HepG2 (cell line): ENCODE measurements at regions of chr6 and their contacts with region 1.

Region 1: DNA sequence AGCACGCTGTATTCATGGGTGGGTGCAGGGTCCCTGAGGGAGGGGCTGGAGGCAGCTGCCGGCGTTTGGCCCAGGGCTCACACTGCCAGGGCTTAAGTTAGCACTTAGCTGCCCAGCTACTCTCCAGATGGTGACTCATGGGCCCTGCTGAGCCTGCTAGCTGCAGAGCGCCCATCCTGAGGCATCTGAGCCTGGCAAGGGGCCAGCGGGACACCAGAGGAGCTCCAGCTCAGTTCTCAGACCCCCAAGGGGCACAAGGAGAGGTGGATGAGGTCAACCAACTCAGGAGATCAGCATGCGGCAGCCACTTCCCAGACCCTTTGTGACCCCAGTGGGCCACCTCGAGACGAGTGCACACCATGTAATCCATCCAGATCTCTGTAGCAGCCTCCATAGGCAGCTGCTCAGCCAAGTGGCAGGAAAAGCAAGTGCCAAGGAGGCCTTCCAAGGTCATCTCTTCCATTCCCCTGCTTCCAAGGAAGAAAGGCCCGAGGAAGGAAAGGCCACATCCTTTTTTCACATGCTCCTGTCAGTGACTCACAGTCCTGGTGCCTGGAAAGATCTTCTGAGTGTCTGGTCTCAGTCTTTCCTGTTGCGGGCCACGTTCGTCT is 35.3 kb downstream of the FOXP4 start:
- DNase-seq: no peak
- ATAC-seq: no peak
- H3K4me3 ChIP-seq: no peak overlapping the region
- H3K27ac ChIP-seq: no peak overlapping the region
- H3K4me1 ChIP-seq: peaks cover 86% of the 10 kb centered on the region
- H3K27me3 ChIP-seq: no peaks in the 10 kb centered on the region
- CTCF ChIP-seq: no peak
- EP300 ChIP-seq: no peak
- POLR2A ChIP-seq: no peak
- RAD21 ChIP-seq: no peak

Region 2: DNA sequence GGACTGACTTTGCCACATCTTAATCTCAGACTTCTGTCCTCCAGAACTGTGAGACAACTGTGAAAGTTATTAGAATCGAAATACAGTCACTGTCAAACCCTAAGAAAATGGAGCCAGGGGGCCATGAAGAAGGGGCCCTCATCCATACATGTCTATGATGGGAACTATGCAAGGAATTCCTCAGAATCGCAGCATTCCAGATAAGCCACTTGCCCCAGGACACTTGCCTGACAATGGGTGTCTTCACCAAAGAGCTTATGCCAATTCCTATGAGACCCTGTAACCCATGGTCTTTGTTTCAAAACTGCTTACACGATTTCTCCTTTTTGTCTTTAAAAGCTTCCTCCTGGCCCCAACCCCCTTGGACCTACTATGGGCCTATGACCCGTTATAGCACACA is 125.7 kb before region 1 on chr6:
- CTCF ChIA-PET with region 1: no interaction called
- POLR2A ChIA-PET with region 1: interaction called, 20 read pairs
- in situ Hi-C with region 1: no loop called
- intact Hi-C with region 1: no loop called
- DNase-seq: no peak
- ATAC-seq: no peak
- H3K4me3 ChIP-seq: no peak overlapping the region
- H3K27ac ChIP-seq: no peak overlapping the region
- H3K4me1 ChIP-seq: peaks cover 90% of the 10 kb centered on the region
- H3K27me3 ChIP-seq: peaks cover 10 to 36% of the 10 kb centered on the region in 2 experiments; a peak in 4 of 5 replicates
- CTCF ChIP-seq: no peak
- EP300 ChIP-seq: no peak
- POLR2A ChIP-seq: no peak
- RAD21 ChIP-seq: no peak

Region 3: DNA sequence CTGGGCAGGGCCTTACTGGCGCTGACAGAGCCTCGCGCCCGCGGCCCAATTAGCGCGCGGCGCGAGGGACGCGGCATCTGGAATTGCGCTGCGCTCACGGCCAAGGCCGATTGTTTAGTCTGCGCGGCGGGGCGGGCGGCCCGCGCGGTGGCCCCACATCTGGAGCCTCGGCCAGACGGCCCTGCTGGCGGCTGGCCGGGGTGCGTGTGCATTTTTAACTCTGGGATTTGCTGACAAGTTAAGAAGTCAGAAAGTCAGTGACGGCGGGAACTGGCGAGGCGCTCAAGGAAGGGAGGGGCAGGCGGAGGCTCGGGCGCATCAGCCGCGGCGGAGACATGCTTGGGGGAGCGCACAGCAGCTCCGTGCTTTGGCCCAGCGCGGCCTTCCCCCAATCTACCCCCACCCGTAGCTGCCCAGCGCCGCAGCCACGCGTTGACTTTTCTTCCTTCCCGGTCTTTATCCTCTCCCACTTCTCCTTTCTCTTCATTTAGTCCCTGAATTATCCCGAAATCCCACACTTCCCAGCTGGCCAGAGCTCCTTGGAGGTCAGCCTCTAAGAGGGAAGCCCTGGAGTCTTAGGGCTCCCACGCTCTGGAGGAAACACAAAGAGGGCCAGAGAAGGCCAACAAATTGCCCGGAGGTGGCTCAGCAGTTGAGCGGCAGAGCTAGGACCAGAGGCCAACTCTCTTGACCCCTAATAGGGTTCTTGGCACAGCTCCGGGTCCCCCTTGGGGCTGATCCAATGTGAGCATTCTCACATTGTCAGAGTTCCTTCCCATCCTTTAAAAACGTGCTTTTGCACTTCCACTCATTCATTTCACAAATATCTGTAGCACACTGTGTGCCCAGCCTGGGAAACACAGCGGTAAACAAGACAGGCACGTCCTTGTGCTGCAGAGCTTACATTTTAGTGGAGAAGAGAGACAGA is 76.1 kb before region 1 on chr6:
- CTCF ChIA-PET with region 1: no interaction called
- POLR2A ChIA-PET with region 1: interaction called, 10 read pairs
- in situ Hi-C with region 1: no loop called
- intact Hi-C with region 1: no loop called
- DNase-seq: no peak
- ATAC-seq: no peak
- H3K4me3 ChIP-seq: no peak overlapping the region
- H3K27ac ChIP-seq: no peak overlapping the region
- H3K4me1 ChIP-seq: peaks cover 76% of the 10 kb centered on the region
- H3K27me3 ChIP-seq: no peaks in the 10 kb centered on the region; a peak in 1 of 5 replicates
- CTCF ChIP-seq: no peak
- EP300 ChIP-seq: no peak
- POLR2A ChIP-seq: no peak
- RAD21 ChIP-seq: no peak

Region 4: GRCh38 chr6:41536795-41537758 is 44.4 kb before region 1 on chr6:
- CTCF ChIA-PET with region 1: no interaction called
- POLR2A ChIA-PET with region 1: interaction called, 16 read pairs
- in situ Hi-C with region 1: no loop called
- intact Hi-C with region 1: no loop called
- DNase-seq: no peak
- ATAC-seq: no peak; the same call in 2 of the 3 replicates
- H3K4me3 ChIP-seq: no peak overlapping the region
- H3K27ac ChIP-seq: no peak overlapping the region
- H3K4me1 ChIP-seq: peaks cover 30% of the 10 kb centered on the region
- H3K27me3 ChIP-seq: no peaks in the 10 kb centered on the region
- CTCF ChIP-seq: no peak
- EP300 ChIP-seq: no peak
- POLR2A ChIP-seq: no peak
- RAD21 ChIP-seq: no peak

Region 5: DNA sequence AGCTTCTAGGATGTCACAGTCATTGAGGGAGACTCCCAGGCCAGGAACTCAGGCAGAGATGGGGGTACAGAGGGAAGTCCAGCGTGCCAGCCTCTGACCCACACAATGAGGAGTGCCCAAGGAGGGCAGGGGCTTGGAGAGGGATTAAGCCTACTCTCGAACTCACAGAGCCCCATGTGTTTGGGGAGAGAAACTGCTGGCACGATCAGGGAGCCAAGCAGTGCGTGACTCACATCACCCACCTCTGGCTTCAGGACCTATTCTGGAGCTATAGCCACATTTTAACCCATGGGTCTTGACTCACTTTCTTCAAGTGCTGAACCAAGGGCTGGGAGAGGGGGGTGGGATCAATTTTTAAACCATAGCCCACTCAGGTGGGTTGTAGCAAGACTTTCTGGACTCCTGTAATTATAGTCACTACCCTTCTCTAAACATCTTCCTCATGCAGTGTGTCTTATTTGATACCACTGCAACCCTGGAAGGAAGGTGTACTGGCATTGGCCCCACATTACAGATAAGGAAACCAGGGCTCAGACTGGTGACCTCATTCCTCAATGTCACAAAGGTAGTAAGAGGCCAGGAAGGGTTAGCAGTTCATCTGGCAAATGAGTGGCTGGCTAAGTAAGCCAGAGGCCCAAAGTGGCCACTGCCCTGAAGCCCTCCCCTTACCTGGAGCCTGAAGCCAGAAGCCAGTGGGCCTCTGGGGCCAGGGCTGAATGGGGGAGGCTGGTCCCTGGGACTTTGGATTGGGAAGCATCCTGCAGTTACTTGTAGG is 23.3 kb before region 1 on chr6:
- CTCF ChIA-PET with region 1: no interaction called
- POLR2A ChIA-PET with region 1: interaction called, 23 read pairs
- in situ Hi-C with region 1: no loop called
- intact Hi-C with region 1: no loop called
- DNase-seq: no peak
- ATAC-seq: no peak
- H3K4me3 ChIP-seq: no peak overlapping the region
- H3K27ac ChIP-seq: no peak overlapping the region
- H3K4me1 ChIP-seq: peaks cover 68% of the 10 kb centered on the region
- H3K27me3 ChIP-seq: no peaks in the 10 kb centered on the region
- CTCF ChIP-seq: no peak
- EP300 ChIP-seq: no peak
- POLR2A ChIP-seq: no peak
- RAD21 ChIP-seq: no peak

Region 6: DNA sequence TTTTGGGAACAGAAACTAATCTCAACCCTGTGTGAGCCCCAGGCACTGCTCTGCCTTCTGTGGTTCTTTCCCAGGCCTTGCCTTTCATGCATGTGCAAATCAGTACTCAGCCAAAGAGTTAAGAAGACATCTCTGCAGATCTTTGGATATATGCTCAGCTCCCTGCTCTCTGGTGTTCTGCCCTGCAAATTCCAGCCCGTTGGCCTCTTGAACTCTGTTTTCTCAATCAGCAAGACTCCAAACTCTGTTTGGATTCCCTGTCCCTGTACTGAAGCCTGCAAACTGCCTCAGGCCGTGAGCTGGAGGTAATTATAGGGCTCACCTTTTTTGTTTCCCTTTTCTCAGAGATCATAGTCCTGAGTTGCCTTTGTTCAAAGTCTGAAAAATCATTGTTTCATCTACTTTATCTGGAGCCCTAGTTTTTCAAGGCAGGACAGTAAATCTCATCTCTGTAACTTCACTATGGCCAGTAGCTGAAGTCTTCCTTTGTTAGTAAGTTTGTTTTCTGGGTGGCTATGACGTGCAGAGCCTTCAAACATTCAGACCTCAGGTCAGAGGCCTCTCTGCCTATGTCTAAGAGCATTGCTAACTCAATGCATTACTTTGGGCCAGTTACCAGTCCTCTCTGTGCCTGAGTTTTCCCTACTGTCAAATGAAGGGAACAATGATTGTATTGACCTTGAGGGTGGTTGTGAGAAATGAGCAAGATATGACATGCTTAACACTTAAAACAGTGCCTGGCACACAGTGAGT is 40.9 kb after region 1 on chr6:
- CTCF ChIA-PET with region 1: no interaction called
- POLR2A ChIA-PET with region 1: no interaction called
- in situ Hi-C with region 1: no loop called
- intact Hi-C with region 1: no loop called
- DNase-seq: no peak
- ATAC-seq: peak; percentile 79
- H3K4me3 ChIP-seq: no peak overlapping the region
- H3K27ac ChIP-seq: no peak overlapping the region
- H3K4me1 ChIP-seq: peaks cover 21% of the 10 kb centered on the region
- H3K27me3 ChIP-seq: peaks cover 2 to 13% of the 10 kb centered on the region in 2 experiments; a peak in 3 of 5 replicates
- CTCF ChIP-seq: no peak
- EP300 ChIP-seq: no peak
- POLR2A ChIP-seq: no peak
- RAD21 ChIP-seq: no peak